ENCODE measurements at regions of chr15 and their contacts with region 1.

Region 1: DNA sequence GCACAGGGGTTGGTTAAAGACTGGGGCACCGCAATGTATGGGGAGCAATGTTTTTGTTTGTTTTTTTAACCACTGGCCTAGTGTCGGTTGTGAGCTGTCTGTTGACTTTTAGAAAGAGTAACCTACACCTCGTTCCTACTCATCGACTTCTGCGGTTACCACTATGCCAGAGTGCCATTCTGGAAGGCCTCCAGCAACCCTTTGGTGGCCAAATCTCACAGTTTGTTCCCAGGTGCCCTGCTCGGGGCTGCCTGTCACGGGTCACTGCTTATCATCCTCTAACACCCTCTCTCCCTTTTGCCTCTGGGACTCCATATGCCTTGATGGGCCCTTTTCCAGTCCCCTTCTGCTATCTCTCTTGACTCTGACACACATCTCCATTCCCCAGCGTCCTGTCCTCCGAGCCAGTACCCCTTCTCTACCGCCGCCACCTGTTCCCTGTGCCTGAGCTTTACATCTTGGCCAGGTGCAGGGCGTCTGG is 290.4 kb upstream of the C2CD4B start:
- DNase-seq: no peak

Region 2: GRCh38 chr15:62569460-62570412 is 114.3 kb after region 1 on chr15:
- intact Hi-C with region 1: no loop called
- DNase-seq: peak in 20 of 42 donors; percentile 15 to 59 (median 36)

Region 3: DNA sequence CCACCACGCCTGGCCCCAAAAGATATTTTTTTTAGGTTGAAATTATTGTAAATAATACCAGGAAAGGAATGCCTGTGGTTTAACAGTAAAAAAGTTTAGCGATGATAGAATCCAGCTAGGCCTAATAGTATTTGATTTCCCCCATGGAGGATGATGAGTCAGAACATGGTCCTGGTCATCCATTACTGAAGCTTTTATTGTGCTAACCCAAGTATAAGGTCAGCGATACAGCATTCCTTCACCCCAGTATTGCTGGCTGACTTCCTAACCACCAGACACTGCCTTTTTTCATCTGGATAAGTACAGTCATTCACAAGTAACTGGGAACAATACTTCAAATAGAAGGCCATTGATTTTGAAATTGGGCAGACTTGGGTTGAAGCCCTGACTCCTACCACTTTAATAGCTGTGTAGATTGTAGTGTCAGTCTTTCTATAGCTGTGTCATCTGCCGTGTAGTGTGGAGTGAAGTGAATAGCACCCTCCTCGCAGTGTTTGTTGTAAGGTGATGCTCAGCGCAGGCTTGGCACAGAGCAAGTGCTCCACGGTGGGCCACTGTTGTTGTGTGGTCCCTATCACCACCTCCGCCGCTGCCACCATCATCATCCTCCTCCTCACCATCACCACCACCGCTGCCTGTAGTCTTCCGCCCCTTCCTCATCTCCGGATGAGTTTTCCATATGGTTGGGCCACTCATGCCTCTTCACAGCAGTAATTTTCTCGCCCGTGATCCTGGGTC is 151.1 kb after region 1 on chr15:
- intact Hi-C with region 1: loop called (anchors 5 kb)
- DNase-seq: no peak

Region 4: DNA sequence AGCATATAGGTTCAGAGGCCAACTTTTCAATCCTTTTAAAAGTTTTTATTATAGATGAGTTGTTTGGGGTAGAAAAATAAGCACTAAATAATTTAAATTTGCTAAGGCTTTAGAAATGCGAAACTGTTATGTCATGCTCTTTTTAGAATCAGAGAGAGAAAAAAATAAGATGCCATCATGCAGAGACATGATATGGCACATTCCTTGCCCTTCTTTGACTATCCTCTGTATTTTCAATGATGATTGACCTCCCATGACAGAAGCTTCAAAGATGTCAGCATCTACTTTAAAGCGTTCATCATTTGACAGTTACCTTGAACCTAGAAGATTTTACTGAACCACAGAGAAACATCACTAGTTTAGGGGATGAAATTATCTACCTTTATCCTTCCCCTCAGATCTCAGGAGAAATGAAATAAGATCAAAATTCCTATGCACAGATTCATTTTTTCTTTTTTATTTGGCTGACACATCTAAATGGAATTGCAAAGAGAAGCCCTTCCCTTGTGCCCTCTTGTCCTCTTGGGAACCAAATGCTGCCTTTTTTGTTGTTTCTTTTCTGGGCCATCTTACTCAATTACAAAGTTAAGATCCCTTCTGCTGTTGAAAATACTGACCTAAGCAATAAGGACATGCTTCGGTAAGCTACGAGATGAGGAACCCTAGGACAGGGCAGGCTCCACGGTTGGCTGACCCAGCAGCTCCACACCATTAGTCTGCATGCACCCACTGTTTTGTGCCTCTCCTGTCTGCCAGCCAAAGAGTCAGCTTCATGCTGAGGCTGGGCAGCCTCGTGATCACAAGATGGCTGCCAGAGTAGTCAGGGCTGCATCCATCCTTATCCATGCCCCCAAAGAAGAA is 297.4 kb after region 1 on chr15:
- intact Hi-C with region 1: no loop called
- DNase-seq: no peak